ENCODE measurements at regions of chr1 and their contacts with region 1.

Region 1: GRCh38 chr1:153990468-153991150 is at the start of gene RPS27:
- DNase-seq: peak; percentile 99
- H3K4me3 ChIP-seq: peak within 1 kb of the TSS; percentile 90 to 100 (median 95)
- H3K27ac ChIP-seq: peak within 1 kb of the TSS; percentile 99 to 100
- H3K4me1 ChIP-seq: peaks cover 16 to 32% (median 25%) of the 10 kb centered on the region in 4 experiments
- H3K27me3 ChIP-seq: no peaks in the 10 kb centered on the region

Region 2: GRCh38 chr1:153791648-153792253 is 198.9 kb before region 1 on chr1:
- CTCF ChIA-PET with region 1: interaction called, 43 read pairs
- POLR2A ChIA-PET with region 1: interaction called, 3 read pairs
- DNase-seq: peak in 2 of 3 donors; percentile 54 to 61
- H3K4me3 ChIP-seq: peak overlapping the region in 1 of 7 experiments; percentile 73
- H3K27ac ChIP-seq: peak overlapping the region in 1 of 2 experiments; percentile 80
- H3K4me1 ChIP-seq: peaks cover 7 to 58% (median 27%) of the 10 kb centered on the region in 4 experiments
- H3K27me3 ChIP-seq: no peaks in the 10 kb centered on the region

Region 3: DNA sequence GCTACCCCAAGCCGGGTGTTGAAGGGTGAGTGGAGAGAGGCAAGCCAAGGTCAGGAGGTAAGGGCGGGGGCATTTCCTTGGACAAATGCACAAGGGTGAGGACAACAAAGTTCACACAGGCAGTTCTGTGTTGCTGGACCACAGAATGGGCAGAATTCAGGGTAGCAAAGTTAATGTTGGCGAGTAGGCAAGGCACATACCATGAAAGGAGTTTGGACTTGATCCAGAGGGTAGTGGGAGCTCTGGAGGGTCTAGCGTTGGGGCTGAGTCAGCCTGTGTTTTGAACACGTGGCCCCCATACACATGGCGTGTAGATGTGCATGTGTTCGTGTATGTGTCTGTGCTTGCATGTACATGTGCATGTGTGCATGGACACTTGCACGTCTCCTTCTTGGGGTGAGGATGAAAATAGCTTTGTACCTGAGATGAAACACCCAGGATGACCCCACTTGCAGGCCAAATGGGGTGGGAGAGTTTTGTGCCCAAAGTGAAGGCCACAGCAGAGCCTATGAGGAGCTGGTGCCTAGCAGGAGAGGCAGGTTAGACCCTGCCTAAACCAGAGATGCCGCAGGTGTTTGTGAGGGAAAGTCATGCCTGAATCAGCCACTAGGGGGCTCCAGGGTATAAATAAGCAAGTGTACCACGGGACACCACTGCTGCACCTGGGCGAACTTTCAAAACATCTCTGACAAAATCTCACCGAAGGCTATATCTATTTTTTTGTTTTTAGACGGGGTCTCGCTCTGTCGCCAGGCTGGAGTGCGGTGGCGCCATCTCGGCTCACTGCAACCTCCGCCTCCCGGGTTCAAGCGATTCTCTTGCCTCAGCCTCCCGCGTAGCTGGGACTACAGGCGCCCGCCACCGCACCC is 193.6 kb before region 1 on chr1:
- CTCF ChIA-PET with region 1: interaction called, 43 read pairs
- POLR2A ChIA-PET with region 1: interaction called, 3 read pairs
- DNase-seq: peak; percentile 70 to 87 (median 82)
- H3K4me3 ChIP-seq: no peak overlapping the region
- H3K27ac ChIP-seq: no peak overlapping the region
- H3K4me1 ChIP-seq: peaks cover 0 to 26% (median 1%) of the 10 kb centered on the region in 4 experiments
- H3K27me3 ChIP-seq: no peaks in the 10 kb centered on the region

Region 4: GRCh38 chr1:153827168-153827964 is 163.2 kb before region 1 on chr1:
- CTCF ChIA-PET with region 1: interaction called, 28 read pairs
- POLR2A ChIA-PET with region 1: no interaction called
- DNase-seq: peak in 2 of 3 donors; percentile 14 to 24
- H3K4me3 ChIP-seq: no peak overlapping the region
- H3K27ac ChIP-seq: no peak overlapping the region
- H3K4me1 ChIP-seq: peaks cover 0 to 1% (median 0%) of the 10 kb centered on the region in 4 experiments
- H3K27me3 ChIP-seq: no peaks in the 10 kb centered on the region

Region 5: DNA sequence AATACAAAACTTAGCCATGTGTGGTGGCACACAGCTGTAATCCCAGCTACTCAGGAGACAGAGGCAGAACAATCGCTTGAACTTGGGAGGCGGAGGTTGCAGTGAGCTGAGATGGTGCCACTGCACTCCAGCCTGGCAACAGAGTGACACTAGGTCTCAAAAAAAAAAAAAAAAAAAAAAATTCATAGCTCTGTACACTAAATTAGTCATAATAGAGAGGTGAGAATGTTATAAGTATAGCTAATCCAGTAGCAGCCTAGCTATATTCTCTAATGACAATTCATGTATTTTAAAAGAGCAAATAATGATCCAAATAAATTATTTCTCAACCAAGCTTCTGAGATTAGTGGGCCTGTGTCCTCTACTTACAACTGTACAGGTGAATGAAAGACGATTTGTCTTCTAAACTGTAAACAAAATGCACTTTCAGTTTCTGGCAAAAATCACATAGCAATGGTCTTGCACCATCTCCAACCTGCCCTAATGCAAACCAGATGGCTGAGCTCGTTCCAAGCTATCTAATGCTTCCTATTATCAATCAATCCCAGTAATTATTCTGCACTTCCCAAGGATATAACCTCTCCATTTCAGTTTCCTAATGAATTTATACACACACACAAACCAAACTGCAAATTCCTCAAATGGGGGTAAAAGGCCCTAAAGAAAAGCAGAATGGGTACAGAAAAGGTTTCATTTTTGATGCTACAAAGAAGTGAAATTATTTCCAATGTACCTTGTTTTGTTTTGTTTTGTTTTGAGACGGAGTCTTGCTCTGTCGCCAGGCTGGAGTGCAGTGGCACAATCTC is 124.4 kb before region 1 on chr1:
- CTCF ChIA-PET with region 1: no interaction called
- POLR2A ChIA-PET with region 1: no interaction called
- DNase-seq: no peak
- H3K4me3 ChIP-seq: no peak overlapping the region
- H3K27ac ChIP-seq: no peak overlapping the region
- H3K4me1 ChIP-seq: peaks cover 0 to 1% (median 0%) of the 10 kb centered on the region in 4 experiments
- H3K27me3 ChIP-seq: no peaks in the 10 kb centered on the region

Region 6: DNA sequence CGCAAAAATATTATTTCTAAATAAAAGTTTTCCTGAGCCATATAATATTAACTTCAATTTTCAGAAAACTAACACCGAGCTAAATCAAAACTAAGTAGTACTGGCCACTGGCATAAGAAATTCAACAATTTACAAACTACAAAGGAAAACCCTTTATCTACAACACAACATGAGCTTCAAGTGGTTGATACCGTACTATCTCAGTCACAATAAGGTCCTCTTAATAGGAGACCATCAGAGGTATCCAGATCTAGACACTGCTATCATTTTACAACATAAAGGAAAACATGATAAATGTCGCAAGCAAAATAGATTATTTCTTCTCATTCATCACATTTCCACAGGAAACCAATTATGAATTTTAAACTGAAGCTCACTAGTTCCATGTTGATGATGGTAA is 107.4 kb before region 1 on chr1:
- CTCF ChIA-PET with region 1: no interaction called
- POLR2A ChIA-PET with region 1: no interaction called
- DNase-seq: peak in 2 of 3 donors; percentile 19 to 56
- H3K4me3 ChIP-seq: no peak overlapping the region
- H3K27ac ChIP-seq: no peak overlapping the region
- H3K4me1 ChIP-seq: peaks cover 11 to 34% (median 26%) of the 10 kb centered on the region in 4 experiments
- H3K27me3 ChIP-seq: no peaks in the 10 kb centered on the region

Region 7: GRCh38 chr1:153946622-153947241 is 43.9 kb before region 1 on chr1 and contains the start of gene DENND4B:
- CTCF ChIA-PET with region 1: interaction called, 10 read pairs
- POLR2A ChIA-PET with region 1: interaction called, 17 read pairs
- DNase-seq: peak; percentile 77 to 88 (median 87)
- H3K4me3 ChIP-seq: peak within 1 kb of the TSS; percentile 71 to 92 (median 83)
- H3K27ac ChIP-seq: peak within 1 kb of the TSS; percentile 83 to 91
- H3K4me1 ChIP-seq: peaks cover 4 to 33% (median 30%) of the 10 kb centered on the region in 4 experiments
- H3K27me3 ChIP-seq: no peaks in the 10 kb centered on the region

Region 8: GRCh38 chr1:153967082-153968000 is 23.3 kb before region 1 on chr1 and contains the start of gene CREB3L4:
- CTCF ChIA-PET with region 1: interaction called, 65 read pairs
- POLR2A ChIA-PET with region 1: interaction called, 12 read pairs
- DNase-seq: peak; percentile 97 to 99 (median 99)
- H3K4me3 ChIP-seq: peak within 1 kb of the TSS; percentile 81 to 97 (median 86)
- H3K27ac ChIP-seq: peak within 1 kb of the TSS; percentile 75 to 91
- H3K4me1 ChIP-seq: peaks cover 4 to 61% (median 49%) of the 10 kb centered on the region in 4 experiments
- H3K27me3 ChIP-seq: no peaks in the 10 kb centered on the region

Region 9: GRCh38 chr1:153977250-153978240 is 13.1 kb before region 1 on chr1 and contains the start of gene JTB:
- CTCF ChIA-PET with region 1: interaction called, 65 read pairs
- POLR2A ChIA-PET with region 1: interaction called, 10 read pairs
- DNase-seq: peak; percentile 78 to 91 (median 88)
- H3K4me3 ChIP-seq: peak within 1 kb of the TSS; percentile 80 to 98 (median 88)
- H3K27ac ChIP-seq: peak within 1 kb of the TSS; percentile 75 to 93
- H3K4me1 ChIP-seq: peaks cover 4 to 35% (median 22%) of the 10 kb centered on the region in 4 experiments
- H3K27me3 ChIP-seq: no peaks in the 10 kb centered on the region